Endothelial cell of umbilical vein (primary cell): ENCODE measurements at regions of chr16 and their contacts with region 1.

Region 1: GRCh38 chr16:12573730-12574383 is 229.8 kb downstream of the CPPED1 start:
- DNase-seq: peak; percentile 79
- H3K4me3 ChIP-seq: no peak overlapping the region
- H3K27ac ChIP-seq: no peak overlapping the region
- H3K4me1 ChIP-seq: no peaks in the 10 kb centered on the region
- H3K27me3 ChIP-seq: no peaks in the 10 kb centered on the region
- CTCF ChIP-seq: peak; percentile 78 to 81
- POLR2A ChIP-seq: no peak

Region 2: DNA sequence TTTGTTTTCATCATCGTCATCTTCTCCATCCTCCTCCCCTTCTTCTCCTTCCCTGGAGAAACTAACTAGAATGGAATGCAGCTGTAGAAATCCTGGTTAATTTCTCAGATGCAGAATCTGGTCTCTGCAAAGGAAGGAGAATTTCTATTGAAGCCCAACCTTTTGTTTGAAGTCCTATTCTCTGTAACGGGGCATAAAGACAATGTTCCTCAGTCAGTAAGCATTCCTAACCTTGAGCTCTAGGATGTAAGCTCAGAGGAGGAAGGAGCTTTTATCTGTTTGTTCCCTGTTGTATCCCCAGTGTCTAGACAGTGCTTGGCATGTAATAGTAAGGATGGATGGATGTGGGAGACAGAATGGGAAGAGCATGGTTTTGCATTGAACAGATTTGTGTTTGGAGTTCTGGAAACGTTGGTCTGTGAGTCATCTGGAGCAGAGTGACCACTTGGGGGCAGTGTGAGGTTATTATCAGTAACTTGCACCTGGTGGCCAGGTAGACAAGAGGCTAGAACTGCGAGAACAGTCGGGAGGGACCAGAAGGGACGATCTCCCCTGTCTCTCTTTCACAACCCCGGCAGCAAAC is 233.6 kb before region 1 on chr16:
- CTCF ChIA-PET with region 1: interaction called, 3 read pairs
- POLR2A ChIA-PET with region 1: no interaction called
- dilution Hi-C with region 1: no loop called
- intact Hi-C with region 1: loop called (anchors 5 kb)
- DNase-seq: peak; percentile 47
- H3K4me3 ChIP-seq: no peak overlapping the region
- H3K27ac ChIP-seq: no peak overlapping the region
- H3K4me1 ChIP-seq: peaks cover 17% of the 10 kb centered on the region
- H3K27me3 ChIP-seq: no peaks in the 10 kb centered on the region
- CTCF ChIP-seq: peak; percentile 45 to 46
- POLR2A ChIP-seq: no peak

Region 3: GRCh38 chr16:12646490-12647274 is 72.8 kb after region 1 on chr16:
- CTCF ChIA-PET with region 1: interaction called, 13 read pairs
- POLR2A ChIA-PET with region 1: no interaction called
- dilution Hi-C with region 1: no loop called
- intact Hi-C with region 1: no loop called
- DNase-seq: peak; percentile 94
- H3K4me3 ChIP-seq: no peak overlapping the region
- H3K27ac ChIP-seq: peak overlapping the region; percentile 67
- H3K4me1 ChIP-seq: peaks cover 29% of the 10 kb centered on the region
- H3K27me3 ChIP-seq: no peaks in the 10 kb centered on the region
- CTCF ChIP-seq: no peak
- POLR2A ChIP-seq: no peak

Region 4: DNA sequence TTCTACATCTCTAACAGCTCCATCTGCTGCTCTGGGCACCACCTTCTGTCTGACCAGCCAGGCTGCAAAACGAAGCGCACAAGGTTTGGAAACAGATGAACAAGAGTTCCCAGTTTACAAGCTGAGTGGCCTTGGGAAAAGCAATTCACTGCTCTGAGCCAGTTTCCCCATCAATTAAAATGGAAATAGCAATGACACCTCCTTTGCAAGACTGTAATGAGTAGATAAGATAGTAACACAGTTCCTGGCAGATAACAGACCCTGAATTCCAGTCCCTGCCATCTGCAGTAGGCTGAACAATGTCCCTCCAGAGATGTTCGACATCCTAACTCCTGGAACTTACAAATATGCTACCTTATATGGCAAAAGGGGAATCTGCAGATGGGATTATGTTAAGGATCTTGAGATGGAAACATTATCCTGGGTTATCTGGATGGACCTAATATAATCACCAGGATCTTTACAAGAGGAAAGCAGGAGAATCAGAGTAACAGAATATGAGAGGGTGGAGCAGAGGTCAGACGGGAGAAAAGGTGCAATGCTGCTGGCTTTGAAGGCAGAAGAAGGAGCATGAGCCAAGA is 201.9 kb after region 1 on chr16:
- CTCF ChIA-PET with region 1: no interaction called
- POLR2A ChIA-PET with region 1: no interaction called
- dilution Hi-C with region 1: no loop called
- intact Hi-C with region 1: no loop called
- DNase-seq: no peak
- H3K4me3 ChIP-seq: no peak overlapping the region
- H3K27ac ChIP-seq: no peak overlapping the region
- H3K4me1 ChIP-seq: peaks cover 6% of the 10 kb centered on the region
- H3K27me3 ChIP-seq: no peaks in the 10 kb centered on the region
- CTCF ChIP-seq: no peak
- POLR2A ChIP-seq: no peak

Region 5: DNA sequence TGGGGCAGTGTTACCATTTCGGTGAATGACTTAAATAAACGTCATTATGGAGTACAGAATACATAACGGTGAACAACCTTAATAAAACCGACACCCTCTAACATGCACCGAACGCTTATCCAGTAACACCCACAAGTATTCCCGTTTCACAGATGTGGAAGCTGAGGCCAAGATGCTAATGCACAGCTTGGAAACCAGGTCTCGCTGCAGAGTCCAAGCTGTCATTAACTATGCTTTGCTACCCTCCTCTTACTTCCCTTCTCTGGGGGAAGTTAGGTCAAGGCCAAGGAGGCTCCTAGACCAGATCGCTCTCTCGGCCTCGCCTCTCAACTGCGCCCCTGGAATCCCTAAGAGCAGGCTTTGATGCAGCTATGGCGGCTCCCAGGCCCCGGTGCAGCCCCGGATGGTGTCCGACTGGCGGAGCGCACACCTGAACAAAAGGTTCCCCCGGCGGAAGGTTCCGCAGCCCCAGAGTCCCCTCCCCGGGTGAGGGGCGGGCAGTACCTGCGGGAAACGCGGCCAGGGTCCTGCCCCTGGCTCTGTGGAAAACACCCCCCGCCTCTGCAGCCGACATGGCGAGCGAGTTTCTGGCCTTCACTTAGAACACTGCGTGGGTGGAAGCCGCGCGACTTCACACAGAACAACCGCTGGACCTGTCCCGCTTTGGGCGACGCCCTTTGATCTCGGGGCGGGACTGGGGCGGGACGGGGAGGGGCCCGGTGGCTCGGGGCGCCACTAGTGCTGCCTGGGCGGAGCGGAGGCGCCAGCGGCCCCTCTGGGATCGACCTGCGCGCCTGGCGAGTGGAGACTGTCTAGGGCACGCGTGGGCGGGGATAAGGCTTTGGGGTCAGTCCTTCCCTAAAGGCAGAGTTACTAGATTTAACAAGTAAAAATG is 229.6 kb after region 1 on chr16 and contains the start of gene CPPED1:
- CTCF ChIA-PET with region 1: interaction called, 7 read pairs
- POLR2A ChIA-PET with region 1: no interaction called
- dilution Hi-C with region 1: no loop called
- intact Hi-C with region 1: loop called (anchors 5 kb)
- DNase-seq: peak; percentile 91
- H3K4me3 ChIP-seq: peak within 1 kb of the TSS; percentile 35 to 89 (median 76)
- H3K27ac ChIP-seq: peak within 1 kb of the TSS; percentile 99
- H3K4me1 ChIP-seq: peaks cover 26% of the 10 kb centered on the region
- H3K27me3 ChIP-seq: no peaks in the 10 kb centered on the region
- CTCF ChIP-seq: no peak
- POLR2A ChIP-seq: peak; percentile 55
- total RNA-seq, gene CPPED1: 55.8 and 59.3 TPM in 2 replicates

Region 6: DNA sequence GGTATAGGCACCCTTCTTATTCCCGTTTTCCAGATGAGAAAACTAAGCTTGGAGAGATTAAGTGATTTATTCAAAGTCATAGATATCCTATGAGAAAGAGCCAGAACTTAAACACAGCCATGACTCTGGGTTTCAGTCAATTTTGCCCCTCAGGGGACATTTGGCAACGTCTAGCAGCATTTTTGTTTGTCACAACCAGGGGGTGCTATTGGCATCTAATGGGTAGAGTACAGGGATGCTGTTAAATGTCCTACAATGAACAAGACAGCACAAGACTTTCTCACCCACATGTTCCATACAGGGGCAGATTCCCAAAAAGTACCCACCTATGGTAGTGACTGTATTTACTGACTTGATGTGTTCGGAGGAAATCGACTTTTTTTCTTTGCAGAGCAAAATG is 322.7 kb after region 1 on chr16:
- CTCF ChIA-PET with region 1: interaction called, 5 read pairs
- POLR2A ChIA-PET with region 1: no interaction called
- dilution Hi-C with region 1: no loop called
- intact Hi-C with region 1: loop called (anchors 5 kb)
- DNase-seq: peak; percentile 18
- H3K4me3 ChIP-seq: no peak overlapping the region
- H3K27ac ChIP-seq: no peak overlapping the region
- H3K4me1 ChIP-seq: no peaks in the 10 kb centered on the region
- H3K27me3 ChIP-seq: peaks cover 22 to 24% of the 10 kb centered on the region in 2 experiments
- CTCF ChIP-seq: peak; percentile 40 to 46
- POLR2A ChIP-seq: no peak

Region 7: GRCh38 chr16:12907670-12908233 is 333.9 kb after region 1 on chr16:
- CTCF ChIA-PET with region 1: interaction called, 13 read pairs
- POLR2A ChIA-PET with region 1: no interaction called
- dilution Hi-C with region 1: no loop called
- intact Hi-C with region 1: no loop called
- DNase-seq: peak; percentile 4
- H3K4me3 ChIP-seq: no peak overlapping the region
- H3K27ac ChIP-seq: no peak overlapping the region
- H3K4me1 ChIP-seq: no peaks in the 10 kb centered on the region
- H3K27me3 ChIP-seq: peaks cover 15 to 18% of the 10 kb centered on the region in 2 experiments
- CTCF ChIP-seq: no peak
- POLR2A ChIP-seq: no peak